ENCODE measurements at regions of chr22 and their contacts with region 1.

Region 1: DNA sequence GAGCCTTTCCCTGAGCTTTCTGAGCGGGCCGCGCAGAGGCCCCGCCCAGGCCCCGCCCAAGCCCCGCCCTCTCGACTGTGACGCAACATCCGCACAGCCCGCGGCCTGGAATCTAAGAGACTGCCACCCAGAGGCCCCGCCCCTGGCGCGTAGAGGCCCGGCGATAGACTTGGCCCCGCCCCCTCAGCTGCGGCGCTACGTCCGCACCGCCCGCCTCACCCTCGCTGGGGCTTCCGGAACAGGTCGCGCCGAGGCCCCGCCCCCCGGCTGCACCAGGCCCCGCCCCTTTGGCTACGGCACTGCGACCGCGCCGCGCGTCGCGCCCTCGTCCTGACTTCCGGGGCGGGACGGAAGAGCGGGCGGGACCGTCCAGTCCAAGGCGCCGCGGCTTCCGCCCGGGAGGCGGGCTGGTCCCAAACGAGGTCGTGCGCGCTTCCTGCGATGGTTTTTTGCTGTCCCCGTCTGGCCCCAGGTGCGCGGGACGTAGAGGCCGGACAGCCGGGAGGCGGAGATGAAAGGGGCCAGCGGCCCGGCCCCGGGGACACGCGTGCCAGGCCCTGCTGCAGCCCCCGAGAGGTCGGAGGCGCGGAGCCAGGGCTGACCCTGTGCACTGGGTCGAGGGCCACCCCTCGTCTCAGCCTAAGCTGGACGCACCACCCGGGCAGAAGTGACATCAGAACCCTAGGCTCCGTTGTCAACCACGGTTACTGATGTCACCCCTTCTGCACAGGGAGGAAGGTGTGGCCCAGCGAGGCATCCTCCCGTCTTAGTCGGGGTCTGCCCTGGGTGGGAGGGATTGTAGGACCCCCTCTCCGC is 59.0 kb upstream of the WNT7B start:
- DNase-seq: peak; percentile 99 to 100 (median 100)
- H3K4me3 ChIP-seq: peak overlapping the region; percentile 76 to 97
- H3K4me3 Mint-ChIP-seq: peak overlapping the region; percentile 84 to 93 (median 88)
- H3K27ac ChIP-seq: peak overlapping the region; percentile 98
- H3K27ac Mint-ChIP-seq: peak overlapping the region; percentile 92 to 98 (median 97)
- H3K4me1 ChIP-seq: peaks cover 20% of the 10 kb centered on the region
- H3K4me1 Mint-ChIP-seq: peaks cover 8 to 26% (median 15%) of the 10 kb centered on the region in 4 donors
- H3K27me3 ChIP-seq: no peaks in the 10 kb centered on the region
- H3K27me3 Mint-ChIP-seq: no peaks in the 10 kb centered on the region

Region 2: GRCh38 chr22:45934659-45935341 is 101.2 kb before region 1 on chr22:
- CTCF ChIA-PET with region 1: no interaction called
- POLR2A ChIA-PET with region 1: no interaction called
- intact Hi-C with region 1: no loop called
- DNase-seq: no peak
- H3K4me3 ChIP-seq: no peak overlapping the region
- H3K4me3 Mint-ChIP-seq: no peak overlapping the region
- H3K27ac ChIP-seq: no peak overlapping the region
- H3K27ac Mint-ChIP-seq: no peak overlapping the region
- H3K4me1 ChIP-seq: no peaks in the 10 kb centered on the region
- H3K4me1 Mint-ChIP-seq: no peaks in the 10 kb centered on the region
- H3K27me3 ChIP-seq: no peaks in the 10 kb centered on the region
- H3K27me3 Mint-ChIP-seq: peaks cover 10 to 12% of the 10 kb centered on the region in 2 donors

Region 3: GRCh38 chr22:46006379-46007002 is 29.5 kb before region 1 on chr22:
- CTCF ChIA-PET with region 1: interaction called, 53 read pairs
- POLR2A ChIA-PET with region 1: interaction called, 73 read pairs
- intact Hi-C with region 1: no loop called
- DNase-seq: peak; percentile 77 to 82 (median 81)
- H3K4me3 ChIP-seq: no peak overlapping the region
- H3K4me3 Mint-ChIP-seq: peak overlapping the region in 1 of 8 donors; percentile 43
- H3K27ac ChIP-seq: no peak overlapping the region
- H3K27ac Mint-ChIP-seq: peak overlapping the region in 3 of 7 donors; percentile 8 to 68 (median 22)
- H3K4me1 ChIP-seq: no peaks in the 10 kb centered on the region
- H3K4me1 Mint-ChIP-seq: peaks cover 0 to 5% (median 3%) of the 10 kb centered on the region in 4 donors
- H3K27me3 ChIP-seq: no peaks in the 10 kb centered on the region
- H3K27me3 Mint-ChIP-seq: no peaks in the 10 kb centered on the region

Region 4: GRCh38 chr22:46057762-46058420 is 21.9 kb after region 1 on chr22:
- CTCF ChIA-PET with region 1: interaction called, 15 read pairs
- POLR2A ChIA-PET with region 1: interaction called, 123 read pairs
- intact Hi-C with region 1: loop called (anchors 1 kb)
- DNase-seq: peak; percentile 33 to 57 (median 43)
- H3K4me3 ChIP-seq: no peak overlapping the region
- H3K4me3 Mint-ChIP-seq: peak overlapping the region; percentile 17 to 87 (median 60)
- H3K27ac ChIP-seq: peak overlapping the region; percentile 65
- H3K27ac Mint-ChIP-seq: peak overlapping the region; percentile 10 to 93 (median 84)
- H3K4me1 ChIP-seq: peaks cover 57% of the 10 kb centered on the region
- H3K4me1 Mint-ChIP-seq: peaks cover 15 to 61% (median 40%) of the 10 kb centered on the region in 4 donors
- H3K27me3 ChIP-seq: no peaks in the 10 kb centered on the region
- H3K27me3 Mint-ChIP-seq: no peaks in the 10 kb centered on the region

Region 5: DNA sequence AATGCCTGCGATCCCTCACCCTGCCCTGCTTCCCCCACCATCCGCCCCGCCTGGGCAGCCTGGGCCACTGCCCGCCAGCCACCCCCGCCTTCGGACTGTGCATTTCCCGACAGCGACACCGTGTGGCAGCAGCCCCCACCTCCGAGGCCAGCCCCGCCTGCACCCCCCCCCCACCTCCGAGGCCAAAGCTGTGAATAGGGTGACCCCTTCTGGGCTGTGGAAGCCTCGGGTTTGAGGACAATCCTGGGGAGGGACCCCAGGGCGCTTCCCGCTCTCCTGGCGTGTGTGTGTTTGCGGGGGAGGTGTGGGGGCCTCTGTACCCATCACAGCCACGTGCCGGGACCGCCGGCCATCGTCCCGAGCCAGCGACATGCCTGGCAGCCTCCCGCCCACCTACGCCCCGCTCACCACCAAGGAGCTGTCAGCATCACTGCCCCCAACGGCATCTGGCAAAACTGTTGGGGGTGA is 80.6 kb after region 1 on chr22:
- CTCF ChIA-PET with region 1: interaction called, 8 read pairs
- POLR2A ChIA-PET with region 1: interaction called, 10 read pairs
- intact Hi-C with region 1: loop called (anchors 1 kb)
- DNase-seq: peak; percentile 74 to 83 (median 77)
- H3K4me3 ChIP-seq: no peak overlapping the region
- H3K4me3 Mint-ChIP-seq: no peak overlapping the region
- H3K27ac ChIP-seq: no peak overlapping the region
- H3K27ac Mint-ChIP-seq: peak overlapping the region in 1 of 7 donors; percentile 29
- H3K4me1 ChIP-seq: peaks cover 4% of the 10 kb centered on the region
- H3K4me1 Mint-ChIP-seq: peaks cover 0 to 1% (median 0%) of the 10 kb centered on the region in 4 donors
- H3K27me3 ChIP-seq: no peaks in the 10 kb centered on the region
- H3K27me3 Mint-ChIP-seq: no peaks in the 10 kb centered on the region

Region 6: GRCh38 chr22:46250035-46250782 is 214.3 kb after region 1 on chr22 and contains the start of gene CDPF1:
- CTCF ChIA-PET with region 1: no interaction called
- POLR2A ChIA-PET with region 1: interaction called, 10 read pairs
- intact Hi-C with region 1: loop called (anchors 1 kb)
- DNase-seq: peak; percentile 88 to 91 (median 89)
- H3K4me3 ChIP-seq: peak within 1 kb of the TSS; percentile 29 to 76
- H3K4me3 Mint-ChIP-seq: peak within 1 kb of the TSS; percentile 64 to 88 (median 80)
- H3K27ac ChIP-seq: peak within 1 kb of the TSS; percentile 63
- H3K27ac Mint-ChIP-seq: peak within 1 kb of the TSS; percentile 41 to 94 (median 82)
- H3K4me1 ChIP-seq: peaks cover 24% of the 10 kb centered on the region
- H3K4me1 Mint-ChIP-seq: peaks cover 15 to 48% (median 24%) of the 10 kb centered on the region in 4 donors
- H3K27me3 ChIP-seq: no peaks in the 10 kb centered on the region
- H3K27me3 Mint-ChIP-seq: no peaks in the 10 kb centered on the region
- total RNA-seq, gene CDPF1: 10.3 to 11.5 TPM

Region 7: DNA sequence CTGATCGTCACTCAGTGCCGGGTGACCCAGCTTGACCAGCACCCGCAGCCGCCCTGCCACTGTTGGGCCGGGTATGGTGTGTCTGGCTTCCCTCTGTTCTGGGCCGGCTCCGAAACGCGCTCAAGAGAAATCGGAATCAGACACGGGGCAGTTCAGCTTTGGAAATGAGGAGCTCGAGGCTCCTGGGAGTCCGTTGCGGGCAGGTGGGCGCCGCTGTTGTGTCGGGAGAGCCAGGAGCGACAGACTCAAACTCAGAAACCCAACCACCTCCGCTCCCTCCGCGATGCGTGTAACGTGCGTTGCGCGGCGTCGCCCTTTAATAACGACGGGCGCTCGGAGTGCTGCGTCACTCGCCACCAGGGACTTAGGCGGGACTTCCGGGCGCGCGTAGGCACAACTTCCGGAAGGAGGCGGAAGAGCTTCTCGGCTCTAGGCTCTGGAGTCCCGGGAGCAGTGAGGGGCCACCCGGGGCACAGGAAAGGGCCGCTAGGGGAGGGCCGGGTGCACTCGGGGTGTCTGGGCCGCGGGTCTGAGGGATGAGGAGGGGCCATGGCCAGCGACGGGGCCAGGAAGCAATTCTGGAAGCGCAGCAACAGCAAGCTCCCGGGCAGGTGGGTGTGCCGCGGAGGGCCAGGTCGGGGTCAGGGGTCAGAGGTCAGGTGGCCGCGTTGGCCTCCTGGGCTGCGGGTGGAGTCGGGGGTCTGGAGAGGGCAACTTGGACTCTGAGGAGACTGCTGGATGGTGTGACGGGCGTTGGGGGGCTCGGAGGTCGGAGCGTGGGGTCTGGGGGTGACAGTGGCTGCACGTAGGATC is 726.5 kb after region 1 on chr22 and contains the start of gene TBC1D22A:
- CTCF ChIA-PET with region 1: interaction called, 3 read pairs
- POLR2A ChIA-PET with region 1: interaction called, 3 read pairs
- intact Hi-C with region 1: loop called (anchors 1 kb)
- DNase-seq: peak; percentile 91 to 94 (median 93)
- H3K4me3 ChIP-seq: peak within 1 kb of the TSS; percentile 94 to 96
- H3K4me3 Mint-ChIP-seq: peak within 1 kb of the TSS; percentile 98 to 100 (median 99)
- H3K27ac ChIP-seq: peak within 1 kb of the TSS; percentile 99
- H3K27ac Mint-ChIP-seq: peak within 1 kb of the TSS; percentile 99 to 100 (median 100)
- H3K4me1 ChIP-seq: peaks cover 51% of the 10 kb centered on the region
- H3K4me1 Mint-ChIP-seq: peaks cover 38 to 76% (median 53%) of the 10 kb centered on the region in 4 donors
- H3K27me3 ChIP-seq: no peaks in the 10 kb centered on the region
- H3K27me3 Mint-ChIP-seq: no peaks in the 10 kb centered on the region
- total RNA-seq, gene TBC1D22A: 49.0 to 49.2 TPM